ENCODE measurements at regions of chr12 and their contacts with region 1.

Region 1: DNA sequence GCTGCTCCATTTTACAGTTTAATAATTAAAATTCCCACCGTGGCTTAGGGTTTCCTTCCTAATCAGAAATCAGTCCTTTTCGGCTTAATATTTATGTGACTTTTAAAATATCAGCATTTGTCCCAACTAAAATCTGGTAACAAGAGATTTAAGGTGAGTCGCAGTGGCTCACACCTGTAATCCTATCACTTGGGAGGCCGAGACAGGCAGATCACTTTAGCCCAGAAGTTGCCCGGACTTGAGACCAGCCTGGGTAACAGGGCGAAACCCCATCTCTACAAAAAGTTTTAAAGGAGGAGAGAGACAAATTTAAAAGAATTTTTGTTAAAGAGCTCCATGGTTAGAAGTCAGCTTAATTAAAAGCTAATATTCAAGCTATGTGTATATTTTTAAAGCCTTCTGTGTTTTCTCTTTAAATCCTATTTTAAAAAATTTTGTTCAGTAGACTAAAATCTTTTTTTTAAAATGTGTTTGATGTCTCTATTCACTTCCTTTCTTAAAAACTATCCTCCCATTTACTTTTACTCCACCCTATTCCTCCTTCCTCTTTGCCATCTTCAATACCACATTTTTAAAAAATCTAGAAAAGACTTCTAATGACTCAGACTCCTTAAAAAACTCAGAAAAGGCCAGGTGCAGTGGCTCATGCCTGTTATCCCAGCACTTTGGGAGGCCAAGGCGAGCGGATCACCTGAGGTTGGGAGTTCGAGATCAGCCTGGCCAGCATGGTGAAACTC is 3.8 kb upstream of the TAC3 start:
- DNase-seq: no peak
- ATAC-seq: no peak
- H3K4me3 ChIP-seq: no peak overlapping the region
- H3K27ac ChIP-seq: no peak overlapping the region
- H3K4me1 ChIP-seq: no peaks in the 10 kb centered on the region
- CTCF ChIP-seq: no peak
- EP300 ChIP-seq: no peak
- POLR2A ChIP-seq: no peak
- RAD21 ChIP-seq: no peak

Region 2: DNA sequence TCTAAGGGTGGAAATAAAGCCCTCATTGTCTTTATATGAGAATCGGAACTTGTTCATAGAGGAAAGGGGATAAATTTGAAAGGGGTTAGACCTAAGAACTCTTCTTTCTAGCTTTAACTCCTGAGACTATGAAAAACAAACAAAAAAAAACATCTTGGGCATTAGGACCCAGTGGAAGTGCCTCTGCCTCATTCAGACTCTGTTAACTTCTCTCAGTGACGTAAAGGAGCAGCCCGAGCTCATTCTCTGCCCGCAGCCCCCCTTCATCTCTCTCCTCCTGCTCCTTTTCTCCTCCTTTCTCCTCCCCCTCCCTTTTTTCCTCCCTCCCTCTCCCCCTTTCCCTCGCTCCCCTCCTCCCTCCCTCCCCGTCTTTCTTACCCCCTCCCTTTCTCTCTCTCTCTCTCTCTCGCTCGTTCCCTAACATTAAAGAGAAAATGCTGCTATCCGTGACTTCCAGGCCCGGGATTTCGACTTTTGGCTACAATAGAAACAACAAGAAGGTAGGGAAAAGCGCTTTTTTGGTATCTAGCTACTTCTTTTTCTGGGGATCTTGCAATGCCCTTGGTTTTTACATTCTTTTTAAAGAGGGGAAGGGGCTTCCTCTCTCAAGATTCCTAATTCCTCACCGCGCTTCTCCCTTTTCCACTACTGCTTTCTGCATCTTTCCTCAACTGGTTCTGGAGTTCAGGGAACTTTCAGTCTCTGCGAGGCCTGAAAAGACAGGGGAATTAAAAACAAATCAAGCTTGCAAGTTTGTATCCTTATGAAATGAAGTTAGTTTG is 498.4 kb before region 1 on chr12 and contains the start of gene RBMS2:
- CTCF ChIA-PET with region 1: no interaction called
- POLR2A ChIA-PET with region 1: no interaction called
- DNase-seq: peak; percentile 81 to 96
- ATAC-seq: peak; percentile 91 to 95
- H3K4me3 ChIP-seq: peak within 1 kb of the TSS; percentile 66
- H3K27ac ChIP-seq: peak within 1 kb of the TSS; percentile 87 to 89
- H3K4me1 ChIP-seq: peaks cover 70% of the 10 kb centered on the region
- CTCF ChIP-seq: no peak
- EP300 ChIP-seq: no peak
- POLR2A ChIP-seq: no peak
- RAD21 ChIP-seq: no peak
- polyA plus RNA-seq, gene RBMS2: 46.4 and 61.6 TPM in 2 replicates

Region 3: GRCh38 chr12:57031138-57031725 is 11.1 kb after region 1 on chr12:
- CTCF ChIA-PET with region 1: interaction called, 10 read pairs
- POLR2A ChIA-PET with region 1: no interaction called
- DNase-seq: peak in 1 of 2 experiments; percentile 35
- ATAC-seq: peak in 1 of 2 experiments; percentile 47; a peak in 3 of 6 replicates
- H3K4me3 ChIP-seq: no peak overlapping the region
- H3K27ac ChIP-seq: peak overlapping the region in 1 of 2 experiments; percentile 37; a peak in 2 of 6 replicates
- H3K4me1 ChIP-seq: peaks cover 6% of the 10 kb centered on the region; the same call in 2 of the 3 replicates
- CTCF ChIP-seq: no peak
- EP300 ChIP-seq: no peak
- POLR2A ChIP-seq: no peak
- RAD21 ChIP-seq: no peak

Region 4: GRCh38 chr12:57037264-57037663 is 17.1 kb after region 1 on chr12:
- CTCF ChIA-PET with region 1: interaction called, 10 read pairs
- POLR2A ChIA-PET with region 1: no interaction called
- DNase-seq: no peak
- ATAC-seq: no peak
- H3K4me3 ChIP-seq: no peak overlapping the region
- H3K27ac ChIP-seq: no peak overlapping the region
- H3K4me1 ChIP-seq: no peaks in the 10 kb centered on the region
- CTCF ChIP-seq: no peak
- EP300 ChIP-seq: no peak
- POLR2A ChIP-seq: no peak
- RAD21 ChIP-seq: no peak

Region 5: DNA sequence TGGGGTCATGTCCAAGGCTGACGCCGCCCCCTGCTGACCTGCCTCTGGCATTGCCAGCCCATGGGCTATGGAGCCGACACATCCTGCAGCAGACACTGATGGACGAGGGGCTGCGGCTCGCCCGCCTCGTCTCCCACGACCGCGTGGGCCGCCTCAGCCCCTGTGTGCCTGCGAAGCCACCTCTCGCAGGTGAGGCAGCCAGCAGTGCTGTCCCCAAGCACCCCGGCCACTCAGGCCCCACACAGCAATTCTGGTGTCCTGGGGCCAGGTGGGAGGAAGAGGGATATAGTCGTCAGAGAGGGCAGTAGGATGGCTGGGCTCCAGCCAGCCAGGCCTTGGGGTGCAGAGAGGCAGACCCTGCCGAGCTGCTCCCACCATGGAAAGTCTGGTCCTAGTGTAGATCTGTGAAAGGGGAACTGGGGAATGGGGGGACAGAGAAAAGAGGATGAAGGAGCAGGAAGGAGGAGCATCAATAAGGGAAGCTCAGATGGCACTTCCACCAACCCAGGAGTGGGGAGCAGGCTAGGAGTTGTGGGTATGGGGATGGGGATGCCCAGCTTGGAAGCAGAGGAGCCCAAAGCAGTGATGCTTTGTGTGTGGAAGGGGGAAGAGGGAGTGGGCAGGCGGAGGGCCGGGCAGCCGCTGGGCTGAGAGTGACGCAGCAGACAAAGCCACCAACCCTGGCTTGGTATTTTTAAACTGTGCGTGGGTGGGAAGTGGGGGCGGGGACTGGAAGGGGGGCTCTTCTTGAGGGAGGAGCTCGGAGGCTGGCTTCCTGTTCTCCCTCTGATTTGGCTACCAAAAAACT is 73.5 kb after region 1 on chr12:
- CTCF ChIA-PET with region 1: no interaction called
- POLR2A ChIA-PET with region 1: no interaction called
- DNase-seq: peak; percentile 59 to 64
- ATAC-seq: peak in 1 of 2 experiments; percentile 42; a peak in 3 of 6 replicates
- H3K4me3 ChIP-seq: no peak overlapping the region
- H3K27ac ChIP-seq: peak overlapping the region in 1 of 2 experiments; percentile 47; a peak in 2 of 6 replicates
- H3K4me1 ChIP-seq: peaks cover 11% of the 10 kb centered on the region; the same call in 2 of the 3 replicates
- CTCF ChIP-seq: peak; percentile 60
- EP300 ChIP-seq: no peak
- POLR2A ChIP-seq: no peak
- RAD21 ChIP-seq: peak; percentile 73 to 77; a peak in 3 of 5 replicates